ENCODE measurements at regions of chr7 and their contacts with region 1.

Region 1: DNA sequence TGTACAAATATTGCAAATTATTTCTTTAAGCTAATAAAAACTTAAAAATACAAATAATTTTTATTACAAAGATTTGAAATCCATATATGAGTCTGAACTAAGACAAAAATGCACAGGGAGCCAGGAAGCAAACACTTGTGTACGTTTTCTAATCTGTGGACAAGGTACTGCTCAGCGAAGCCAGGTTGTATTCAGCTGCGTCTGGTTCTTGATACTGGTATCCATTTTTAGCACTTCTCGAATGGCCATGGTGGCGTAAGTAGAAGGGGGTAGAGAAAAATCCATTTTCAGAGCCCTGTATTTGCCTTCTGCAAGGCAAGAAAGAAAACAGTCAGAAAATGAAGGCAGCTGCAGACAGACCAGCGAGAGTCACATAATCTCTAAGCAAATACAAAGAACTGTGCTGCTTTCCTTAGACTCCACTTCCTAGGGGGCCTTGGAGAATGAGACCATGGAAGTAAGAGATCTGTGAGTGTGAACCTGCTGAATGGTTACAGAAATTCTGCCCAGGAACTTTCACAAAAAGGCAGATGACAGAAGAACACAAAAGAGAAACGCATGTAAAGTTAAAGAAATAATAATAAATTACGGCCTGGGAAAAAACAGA is 64.3 kb downstream of the PUS7 start:
- DNase-seq: no peak
- CTCF ChIP-seq: no peak

Region 2: DNA sequence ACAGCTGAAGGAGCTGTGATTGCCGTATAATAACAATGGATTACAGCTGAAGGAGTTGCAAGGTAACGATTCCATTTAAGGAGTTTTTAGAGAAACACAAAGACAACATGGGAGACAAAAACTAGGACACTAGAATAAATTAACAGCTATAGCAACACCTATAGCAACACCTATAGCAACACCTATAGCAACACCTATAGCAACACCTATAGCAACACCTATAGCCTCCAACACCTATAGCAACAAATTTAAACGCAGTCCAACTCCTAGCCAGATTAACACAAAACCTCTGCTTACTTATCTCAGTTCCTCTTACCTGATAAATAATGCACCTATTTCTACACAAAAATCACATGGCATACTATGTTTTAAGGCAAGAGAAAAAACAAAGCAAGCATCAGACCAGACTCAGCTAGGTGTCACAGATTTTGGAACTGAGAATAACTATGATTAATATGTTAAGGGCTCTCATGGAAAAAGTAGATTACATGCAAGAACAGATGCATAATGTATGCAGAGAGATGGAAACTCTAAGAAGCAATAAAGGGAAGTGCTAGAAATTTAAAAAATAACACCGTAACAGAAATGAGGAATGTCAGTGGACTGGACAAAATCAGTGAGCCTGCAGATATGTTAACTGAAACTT is 13.3 kb before region 1 on chr7:
- CTCF ChIA-PET with region 1: interaction called, 12 read pairs
- POLR2A ChIA-PET with region 1: no interaction called
- DNase-seq: no peak
- CTCF ChIP-seq: no peak

Region 3: DNA sequence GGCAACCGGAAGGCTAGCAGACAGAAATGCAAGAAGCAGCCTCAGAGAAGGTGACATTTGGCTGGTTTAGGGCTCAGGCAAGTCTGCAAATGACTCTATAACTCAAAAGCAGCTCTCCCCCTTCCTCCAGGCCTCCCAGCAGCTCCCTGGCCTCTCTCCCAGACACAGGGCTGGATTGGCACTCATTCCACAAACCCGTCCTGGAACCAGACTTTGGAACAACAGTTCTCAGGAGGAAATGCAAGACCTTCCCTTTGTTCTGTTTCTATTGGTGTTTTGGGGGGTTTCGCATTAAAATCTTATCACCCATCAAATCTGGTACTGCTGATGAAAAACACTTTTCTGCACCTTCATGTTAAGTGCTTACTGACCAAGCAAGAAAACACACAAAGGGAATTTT is 163.9 kb after region 1 on chr7:
- CTCF ChIA-PET with region 1: no interaction called
- POLR2A ChIA-PET with region 1: no interaction called
- DNase-seq: no peak
- CTCF ChIP-seq: no peak